HEK293 (cell line): ENCODE measurements at regions of chr1 and their contacts with region 1.

Region 1: GRCh38 chr1:44721485-44722361 is 9.2 kb downstream of the RNU5D-1 start:
- H3K4me3 ChIP-seq: no peak overlapping the region
- H3K27ac ChIP-seq: peak overlapping the region; percentile 57
- H3K4me1 ChIP-seq: no peaks in the 10 kb centered on the region
- CTCF ChIP-seq: no peak

Region 2: DNA sequence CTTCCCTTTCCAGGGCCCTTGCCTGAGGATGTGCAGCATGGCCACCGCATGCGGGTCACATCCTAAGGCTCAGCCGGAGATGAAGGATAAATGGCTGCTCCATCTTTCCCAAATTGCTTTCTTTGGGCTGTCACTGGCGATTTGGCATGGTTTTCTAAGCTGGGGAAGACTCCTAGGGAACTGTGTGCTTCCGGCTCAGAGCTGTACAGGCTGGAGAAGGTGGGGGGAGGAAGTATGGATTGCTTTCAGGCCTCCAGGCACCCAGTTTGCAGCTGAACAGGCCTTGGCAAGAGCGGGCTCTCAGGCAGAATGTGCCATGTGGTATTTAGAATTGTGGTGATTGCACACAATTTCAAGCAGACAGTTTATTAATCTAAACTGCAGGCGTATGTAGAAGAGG is 96.4 kb before region 1 on chr1:
- CTCF ChIA-PET with region 1: no interaction called
- POLR2A ChIA-PET with region 1: no interaction called
- H3K4me3 ChIP-seq: no peak overlapping the region
- H3K27ac ChIP-seq: no peak overlapping the region
- H3K4me1 ChIP-seq: no peaks in the 10 kb centered on the region
- CTCF ChIP-seq: no peak

Region 3: GRCh38 chr1:44696789-44697345 is 24.9 kb before region 1 on chr1:
- CTCF ChIA-PET with region 1: interaction called, 5 read pairs
- POLR2A ChIA-PET with region 1: interaction called, 11 read pairs
- H3K4me3 ChIP-seq: no peak overlapping the region
- H3K27ac ChIP-seq: no peak overlapping the region
- H3K4me1 ChIP-seq: 0 out of 2 replicates have a peak, but pooled peaks cover 2% of the 10 kb centered on the region
- CTCF ChIP-seq: no peak

Region 4: DNA sequence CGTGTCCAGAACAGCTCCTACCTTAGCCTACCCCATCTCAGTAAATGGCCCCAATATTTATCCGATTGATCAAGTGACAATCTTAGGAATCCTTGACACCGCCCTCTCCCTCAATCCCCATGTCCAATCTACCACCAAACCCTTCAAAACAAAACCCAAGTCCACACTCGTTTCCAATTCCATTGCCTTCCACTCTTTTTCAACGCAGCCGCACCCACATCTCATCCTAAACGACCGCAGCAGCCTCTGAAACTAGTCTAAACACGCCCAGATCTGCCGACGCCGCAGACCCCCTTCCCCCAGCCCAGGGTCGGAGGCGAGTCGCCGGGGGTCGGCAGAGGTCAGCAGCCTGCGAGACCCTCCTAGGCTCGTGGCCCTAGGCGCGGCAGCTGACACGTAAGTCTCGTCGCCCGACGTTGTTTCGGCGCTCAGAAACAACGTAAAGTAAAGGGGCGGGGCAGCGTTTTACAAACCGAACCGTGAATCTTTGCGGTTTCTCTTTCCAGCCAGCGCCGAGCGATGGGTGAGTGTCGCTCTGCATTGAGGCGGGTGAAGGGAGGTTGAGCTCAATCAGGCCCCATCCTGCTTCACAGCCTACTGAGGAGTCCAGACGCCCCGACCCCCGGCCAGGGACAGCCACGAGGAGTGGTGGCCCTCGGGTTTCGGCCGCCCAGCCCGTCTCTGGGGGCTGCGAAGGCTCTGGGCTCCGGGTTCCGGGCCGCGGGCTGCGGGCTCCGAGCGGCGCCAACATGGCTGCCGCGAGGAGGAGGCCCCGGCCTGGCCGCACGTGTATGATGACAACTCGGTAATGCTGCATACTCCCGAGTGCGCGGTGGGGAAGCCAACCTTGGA is 53.6 kb after region 1 on chr1 and contains the start of gene RPS8:
- CTCF ChIA-PET with region 1: no interaction called
- POLR2A ChIA-PET with region 1: interaction called, 24 read pairs
- H3K4me3 ChIP-seq: peak within 1 kb of the TSS; percentile 63
- H3K27ac ChIP-seq: peak within 1 kb of the TSS; percentile 99
- H3K4me1 ChIP-seq: no peaks in the 10 kb centered on the region
- CTCF ChIP-seq: no peak

Region 5: DNA sequence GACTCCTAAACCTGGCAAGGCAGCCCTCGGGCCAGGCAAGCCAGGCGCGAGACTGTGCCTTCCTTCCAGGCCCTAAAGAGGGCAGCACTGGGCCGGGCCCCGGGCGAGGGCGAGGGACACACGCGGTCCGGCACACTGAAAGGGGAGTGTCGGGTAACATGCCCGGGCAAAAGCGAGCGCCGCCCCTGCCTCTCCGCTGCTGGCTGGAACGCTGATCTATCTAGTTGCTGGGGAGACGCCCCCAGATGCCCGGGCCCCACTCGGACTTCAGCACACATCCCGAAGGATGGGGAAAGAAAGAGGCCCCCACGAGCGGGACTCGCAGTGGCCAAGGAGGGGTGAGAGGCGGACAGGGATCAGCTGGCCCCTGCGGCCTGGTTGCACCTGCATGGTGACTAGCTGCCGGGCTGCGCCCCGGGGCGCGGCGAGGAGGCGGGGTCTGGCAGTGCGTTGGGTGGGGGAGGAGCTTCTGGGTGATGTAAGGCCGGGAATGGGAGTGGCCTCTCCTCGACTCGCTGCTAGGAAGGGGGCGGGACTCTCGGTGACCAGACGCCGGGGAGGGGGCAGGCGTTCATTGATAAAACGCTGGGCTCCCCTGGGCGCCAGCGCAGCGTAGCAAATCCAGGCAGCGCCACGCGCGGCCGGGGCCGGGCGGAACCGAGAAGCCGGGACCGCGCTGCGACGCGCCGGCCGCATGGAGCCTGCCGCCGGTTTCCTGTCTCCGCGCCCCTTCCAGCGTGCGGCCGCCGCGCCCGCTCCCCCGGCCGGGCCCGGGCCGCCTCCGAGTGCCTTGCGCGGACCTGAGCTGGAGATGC is 78.3 kb after region 1 on chr1 and contains the start of gene PLK3:
- CTCF ChIA-PET with region 1: no interaction called
- POLR2A ChIA-PET with region 1: interaction called, 13 read pairs
- H3K4me3 ChIP-seq: peak within 1 kb of the TSS; percentile 70
- H3K27ac ChIP-seq: peak within 1 kb of the TSS; percentile 80
- H3K4me1 ChIP-seq: no peaks in the 10 kb centered on the region
- CTCF ChIP-seq: peak; percentile 97

Region 6: DNA sequence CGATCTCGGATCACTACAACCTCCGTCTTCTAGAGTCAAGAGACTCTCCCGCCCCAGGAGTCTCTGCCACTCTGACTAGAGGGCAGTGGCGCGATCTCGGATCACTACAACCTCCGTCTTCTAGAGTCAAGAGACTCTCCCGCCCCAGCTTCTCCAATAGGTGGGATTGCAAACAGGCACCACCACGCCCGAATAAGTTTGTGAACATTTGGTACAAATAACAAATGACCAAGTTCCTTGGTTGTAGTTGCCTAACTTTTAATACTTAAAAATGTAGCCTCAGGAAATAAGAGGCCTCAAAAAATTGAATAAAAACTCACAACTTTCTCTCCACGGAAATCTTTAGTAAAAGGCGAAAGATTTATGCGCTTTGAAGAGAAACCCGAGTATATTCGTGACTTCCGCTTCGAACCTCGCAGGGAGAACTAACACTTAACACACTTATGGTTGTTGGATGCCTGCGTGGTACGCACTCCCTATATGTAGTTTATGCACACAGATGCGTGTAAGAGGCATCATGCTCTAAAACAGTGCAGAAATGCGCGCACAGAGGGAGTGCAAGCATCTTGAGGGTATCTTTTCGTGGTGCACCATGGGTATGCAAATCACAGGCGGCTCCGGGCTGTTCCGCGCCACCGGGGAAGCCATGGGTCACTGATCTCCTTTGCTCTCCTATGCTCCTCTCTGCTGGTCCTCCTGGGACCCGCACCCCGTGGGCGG is 98.0 kb after region 1 on chr1:
- CTCF ChIA-PET with region 1: no interaction called
- POLR2A ChIA-PET with region 1: interaction called, 32 read pairs
- H3K4me3 ChIP-seq: peak overlapping the region; percentile 31
- H3K27ac ChIP-seq: peak overlapping the region; percentile 91
- H3K4me1 ChIP-seq: no peaks in the 10 kb centered on the region
- CTCF ChIP-seq: no peak